ENCODE measurements at regions of chr6 and their contacts with region 1.

Region 1: GRCh38 chr6:28136585-28137504 is 4.8 kb upstream of the ZKSCAN8 start:
- DNase-seq: peak; percentile 52 to 91 (median 77)
- ATAC-seq: peak; percentile 35
- H3K4me3 ChIP-seq: peak overlapping the region; percentile 79 to 88
- H3K4me3 Mint-ChIP-seq: peak overlapping the region; percentile 94
- H3K27ac ChIP-seq: peak overlapping the region; percentile 87 to 92
- H3K27ac Mint-ChIP-seq: peak overlapping the region; percentile 99
- H3K4me1 ChIP-seq: peaks cover 28% of the 10 kb centered on the region
- H3K4me1 Mint-ChIP-seq: peaks cover 71% of the 10 kb centered on the region
- H3K27me3 ChIP-seq: no peaks in the 10 kb centered on the region
- H3K27me3 Mint-ChIP-seq: no peaks in the 10 kb centered on the region
- CTCF ChIP-seq: no peak

Region 2: GRCh38 chr6:27809939-27810767 is 326.7 kb before region 1 on chr6:
- CTCF ChIA-PET with region 1: no interaction called
- POLR2A ChIA-PET with region 1: interaction called, 6 read pairs
- intact Hi-C with region 1: loop called in 1 of 2 experiments (anchors 5 kb)
- DNase-seq: peak; percentile 63 to 96 (median 74)
- ATAC-seq: peak; percentile 60
- H3K4me3 ChIP-seq: peak overlapping the region; percentile 52 to 65
- H3K4me3 Mint-ChIP-seq: peak overlapping the region; percentile 95
- H3K27ac ChIP-seq: peak overlapping the region; percentile 83 to 87
- H3K27ac Mint-ChIP-seq: peak overlapping the region; percentile 99
- H3K4me1 ChIP-seq: peaks cover 36% of the 10 kb centered on the region
- H3K4me1 Mint-ChIP-seq: peaks cover 57% of the 10 kb centered on the region
- H3K27me3 ChIP-seq: no peaks in the 10 kb centered on the region
- H3K27me3 Mint-ChIP-seq: no peaks in the 10 kb centered on the region
- CTCF ChIP-seq: no peak

Region 3: DNA sequence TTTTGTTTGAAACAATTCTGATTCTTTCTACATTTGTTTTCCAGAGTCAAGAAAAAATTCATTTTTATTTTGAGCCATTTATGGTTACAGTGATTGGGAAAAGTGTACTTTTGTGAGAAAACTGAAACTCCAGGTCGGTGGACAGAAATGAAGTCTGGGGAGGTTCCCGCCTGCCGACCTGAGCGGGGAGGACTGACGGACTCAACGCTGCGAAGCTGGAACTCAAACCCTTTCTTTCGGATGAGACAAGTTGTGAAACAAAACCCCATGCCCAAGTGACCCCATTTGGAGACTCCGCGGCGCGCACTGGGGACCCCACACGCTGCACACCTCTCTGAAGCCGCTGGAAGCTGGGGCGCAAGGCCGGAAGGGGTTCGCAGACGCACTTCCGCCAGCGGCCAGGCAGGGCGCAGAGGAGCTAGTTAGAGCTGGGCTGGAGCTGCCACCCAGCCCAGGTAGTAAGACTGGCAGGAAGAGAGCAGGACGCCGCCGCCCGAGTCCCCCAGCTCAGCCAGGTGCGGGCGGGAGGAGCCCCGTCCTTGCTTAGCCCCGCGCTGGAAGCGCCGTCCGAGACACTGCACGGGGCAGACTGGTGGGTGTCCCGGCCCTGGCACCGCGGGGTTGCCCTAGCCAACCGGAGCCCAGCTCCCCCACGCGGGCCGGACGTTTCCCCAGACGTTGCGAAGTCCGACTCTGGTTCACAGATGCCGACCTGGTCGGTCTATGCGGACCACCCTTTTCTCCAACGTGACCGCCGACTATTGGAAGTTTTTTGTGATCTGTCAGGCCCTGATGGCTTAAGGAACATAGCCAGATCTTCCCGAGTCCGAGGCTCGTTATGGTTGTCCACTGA is 32.2 kb before region 1 on chr6:
- CTCF ChIA-PET with region 1: interaction called, 4 read pairs
- POLR2A ChIA-PET with region 1: interaction called, 11 read pairs
- intact Hi-C with region 1: loop called (anchors 1 kb)
- DNase-seq: peak; percentile 76 to 93 (median 85)
- ATAC-seq: peak; percentile 99
- H3K4me3 ChIP-seq: peak overlapping the region; percentile 69 to 73
- H3K4me3 Mint-ChIP-seq: peak overlapping the region; percentile 90
- H3K27ac ChIP-seq: peak overlapping the region; percentile 53 to 83
- H3K27ac Mint-ChIP-seq: peak overlapping the region; percentile 89
- H3K4me1 ChIP-seq: peaks cover 5% of the 10 kb centered on the region
- H3K4me1 Mint-ChIP-seq: peaks cover 11% of the 10 kb centered on the region
- H3K27me3 ChIP-seq: no peaks in the 10 kb centered on the region
- H3K27me3 Mint-ChIP-seq: peaks cover under 1% of the 10 kb centered on the region
- CTCF ChIP-seq: peak; percentile 60

Region 4: DNA sequence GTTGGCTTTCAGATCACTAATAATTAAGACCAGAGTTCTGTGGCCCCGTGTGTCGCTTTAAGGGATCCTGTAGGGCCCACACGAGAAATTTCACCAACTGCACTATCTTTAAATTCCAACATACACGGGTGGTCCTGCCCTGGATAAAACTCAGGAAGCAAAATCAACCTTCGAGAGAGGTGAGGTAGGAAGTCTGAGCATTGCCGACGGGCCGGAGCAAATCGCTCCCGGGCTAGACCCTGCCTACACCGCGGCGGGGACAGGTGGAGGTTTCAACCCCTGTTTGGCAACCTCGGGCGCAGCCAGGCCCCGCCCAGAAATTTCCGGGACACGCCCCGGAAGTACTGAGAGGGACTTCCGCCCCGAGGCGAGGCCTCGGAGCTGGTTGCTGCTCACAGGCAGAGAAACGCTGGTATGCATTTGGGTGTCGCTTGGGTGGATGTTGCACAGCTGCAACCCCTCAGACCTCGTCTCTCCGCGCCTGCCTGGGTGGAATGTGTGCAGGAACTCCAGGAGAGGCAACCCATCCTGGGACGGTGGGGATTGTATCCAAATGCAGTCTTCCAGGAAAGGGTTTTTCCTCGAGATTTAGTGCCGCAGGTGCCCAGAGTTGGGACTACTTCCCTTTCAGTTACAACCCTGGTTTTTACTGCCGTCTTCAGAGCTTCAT is 24.7 kb after region 1 on chr6:
- CTCF ChIA-PET with region 1: interaction called, 4 read pairs
- POLR2A ChIA-PET with region 1: interaction called, 6 read pairs
- intact Hi-C with region 1: loop called in 1 of 2 experiments (anchors 1 kb)
- DNase-seq: peak; percentile 70 to 90 (median 83)
- ATAC-seq: peak; percentile 98
- H3K4me3 ChIP-seq: peak overlapping the region; percentile 45 to 49
- H3K4me3 Mint-ChIP-seq: peak overlapping the region; percentile 76
- H3K27ac ChIP-seq: peak overlapping the region in 1 of 2 experiments; percentile 4
- H3K27ac Mint-ChIP-seq: no peak overlapping the region
- H3K4me1 ChIP-seq: peaks cover 12% of the 10 kb centered on the region
- H3K4me1 Mint-ChIP-seq: peaks cover 15% of the 10 kb centered on the region
- H3K27me3 ChIP-seq: no peaks in the 10 kb centered on the region
- H3K27me3 Mint-ChIP-seq: peaks cover 4% of the 10 kb centered on the region
- CTCF ChIP-seq: no peak

Region 5: GRCh38 chr6:28349892-28350737 is 213.3 kb after region 1 on chr6 and contains the start of gene ZKSCAN3:
- CTCF ChIA-PET with region 1: interaction called, 10 read pairs
- POLR2A ChIA-PET with region 1: interaction called, 3 read pairs
- intact Hi-C with region 1: loop called in 1 of 2 experiments (anchors 1 kb)
- DNase-seq: peak; percentile 57 to 88 (median 82)
- ATAC-seq: peak; percentile 99
- H3K4me3 ChIP-seq: peak within 1 kb of the TSS; percentile 69 to 81
- H3K4me3 Mint-ChIP-seq: peak within 1 kb of the TSS; percentile 98
- H3K27ac ChIP-seq: peak within 1 kb of the TSS; percentile 54 to 55
- H3K27ac Mint-ChIP-seq: peak within 1 kb of the TSS; percentile 95
- H3K4me1 ChIP-seq: peaks cover 15% of the 10 kb centered on the region
- H3K4me1 Mint-ChIP-seq: peaks cover 36% of the 10 kb centered on the region
- H3K27me3 ChIP-seq: peaks cover 0 to 3% of the 10 kb centered on the region in 2 experiments
- H3K27me3 Mint-ChIP-seq: peaks cover 12% of the 10 kb centered on the region
- CTCF ChIP-seq: no peak
- total RNA-seq, gene ZKSCAN3: 0.61 to 0.68 TPM